ENCODE measurements at regions of chr22 and their contacts with region 1.

Region 1: GRCh38 chr22:45163451-45164269 is at the start of gene NUP50:
- DNase-seq: peak; percentile 95 to 98 (median 97)
- H3K4me3 ChIP-seq: peak within 1 kb of the TSS; percentile 64 to 73
- H3K4me3 Mint-ChIP-seq: peak within 1 kb of the TSS; percentile 93 to 99 (median 97)
- H3K27ac ChIP-seq: peak within 1 kb of the TSS; percentile 88
- H3K27ac Mint-ChIP-seq: peak within 1 kb of the TSS; percentile 92 to 98 (median 97)
- H3K4me1 ChIP-seq: peaks cover 68% of the 10 kb centered on the region
- H3K4me1 Mint-ChIP-seq: peaks cover 42 to 74% (median 50%) of the 10 kb centered on the region in 4 donors
- H3K27me3 ChIP-seq: no peaks in the 10 kb centered on the region
- H3K27me3 Mint-ChIP-seq: no peaks in the 10 kb centered on the region
- total RNA-seq, gene NUP50: 142 to 158 TPM

Region 2: DNA sequence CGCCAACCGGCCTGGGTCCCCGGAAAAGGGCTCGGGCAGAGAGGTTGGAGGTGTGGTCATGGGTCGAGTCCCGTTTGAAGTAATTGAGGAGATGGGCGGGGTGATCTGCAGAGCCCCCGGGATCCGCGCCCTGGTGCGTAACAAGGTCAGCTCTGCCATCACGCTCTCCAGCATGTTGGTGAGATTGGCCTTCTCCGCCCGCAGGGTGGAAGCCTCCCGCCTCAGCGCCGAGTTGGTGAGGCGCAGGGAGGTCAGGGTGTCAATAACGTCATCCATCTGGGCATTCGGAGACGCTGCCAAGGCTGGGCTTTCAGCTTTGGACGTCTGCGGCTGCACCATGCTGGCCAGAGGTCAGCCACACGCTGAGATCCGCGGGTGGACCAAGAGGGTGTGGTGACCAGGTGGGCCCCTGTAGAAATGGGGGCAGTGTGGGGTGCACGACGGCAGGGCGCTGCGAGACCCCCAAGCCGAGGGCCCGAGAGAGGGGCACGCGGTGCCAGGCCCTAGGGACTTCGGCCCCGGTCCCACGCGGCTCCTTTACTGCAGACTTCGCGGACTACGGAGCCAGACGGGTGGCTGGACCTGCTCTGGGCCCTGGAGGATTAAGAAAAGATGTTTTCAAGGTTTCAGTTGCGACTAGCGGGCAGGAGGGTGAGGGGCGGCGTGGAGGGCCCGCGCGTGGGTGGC is 666.3 kb before region 1 on chr22:
- CTCF ChIA-PET with region 1: no interaction called
- POLR2A ChIA-PET with region 1: no interaction called
- intact Hi-C with region 1: loop called (anchors 5 kb)
- DNase-seq: peak in 2 of 5 donors; percentile 9 to 46
- H3K4me3 ChIP-seq: peak overlapping the region in 1 of 2 donors; percentile 45
- H3K4me3 Mint-ChIP-seq: peak overlapping the region; percentile 52 to 84 (median 78)
- H3K27ac ChIP-seq: peak overlapping the region; percentile 73
- H3K27ac Mint-ChIP-seq: peak overlapping the region; percentile 82 to 91 (median 89)
- H3K4me1 ChIP-seq: peaks cover 56% of the 10 kb centered on the region
- H3K4me1 Mint-ChIP-seq: peaks cover 23 to 61% (median 42%) of the 10 kb centered on the region in 4 donors
- H3K27me3 ChIP-seq: no peaks in the 10 kb centered on the region
- H3K27me3 Mint-ChIP-seq: no peaks in the 10 kb centered on the region

Region 3: GRCh38 chr22:44567846-44568493 is 595.7 kb before region 1 on chr22:
- CTCF ChIA-PET with region 1: no interaction called
- POLR2A ChIA-PET with region 1: no interaction called
- intact Hi-C with region 1: no loop called
- DNase-seq: peak in 4 of 5 donors; percentile 30 to 39 (median 34)
- H3K4me3 ChIP-seq: no peak overlapping the region
- H3K4me3 Mint-ChIP-seq: no peak overlapping the region
- H3K27ac ChIP-seq: no peak overlapping the region
- H3K27ac Mint-ChIP-seq: no peak overlapping the region
- H3K4me1 ChIP-seq: no peaks in the 10 kb centered on the region
- H3K4me1 Mint-ChIP-seq: no peaks in the 10 kb centered on the region
- H3K27me3 ChIP-seq: no peaks in the 10 kb centered on the region
- H3K27me3 Mint-ChIP-seq: peaks cover 9 to 10% of the 10 kb centered on the region in 2 donors

Region 4: DNA sequence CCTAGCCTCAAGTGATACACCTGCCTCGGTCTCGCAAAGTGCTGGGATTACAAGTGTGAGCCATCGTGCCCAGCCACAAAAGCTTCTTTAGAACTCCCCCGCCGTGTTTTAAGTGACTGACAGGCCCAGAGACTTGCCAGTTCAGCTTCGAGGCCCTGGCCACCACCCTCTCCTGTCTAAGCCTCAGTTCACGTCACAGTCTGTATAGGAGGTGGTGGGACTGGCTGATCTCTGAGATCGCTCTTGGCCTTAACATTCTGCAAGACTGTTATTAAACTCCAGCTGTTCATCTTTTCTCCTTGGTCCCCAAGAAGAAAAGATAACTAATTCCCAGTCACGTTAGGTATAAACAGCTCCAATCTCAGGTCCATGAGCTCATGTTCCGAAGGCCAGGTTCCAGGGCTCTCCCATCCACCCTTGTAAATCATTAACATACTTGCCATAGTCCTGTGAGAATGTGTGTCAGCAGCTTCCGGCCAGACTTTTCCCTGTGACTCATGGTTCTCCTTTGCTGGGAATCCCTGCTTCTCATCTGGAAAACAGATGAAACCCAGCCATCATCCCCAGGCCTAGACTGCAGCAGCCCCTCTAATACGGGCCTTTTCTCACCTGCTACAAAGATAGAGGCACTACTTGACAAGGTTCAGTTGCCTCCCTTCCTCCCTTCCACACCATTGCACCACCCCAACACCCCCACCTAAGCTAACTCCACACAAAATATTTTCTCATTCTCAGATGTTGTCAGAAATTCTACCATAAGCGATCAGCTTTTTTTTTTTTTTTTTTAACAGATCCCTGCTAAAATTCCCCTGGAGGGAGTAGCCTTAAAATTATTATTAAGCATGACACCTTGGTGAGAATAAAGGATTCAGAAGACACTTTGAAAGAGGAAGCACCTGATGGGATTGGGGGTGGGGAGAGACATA is 82.7 kb after region 1 on chr22:
- CTCF ChIA-PET with region 1: no interaction called
- POLR2A ChIA-PET with region 1: interaction called, 5 read pairs
- intact Hi-C with region 1: loop called (anchors 5 kb)
- DNase-seq: no peak
- H3K4me3 ChIP-seq: no peak overlapping the region
- H3K4me3 Mint-ChIP-seq: peak overlapping the region in 2 of 8 donors; percentile 40 to 80
- H3K27ac ChIP-seq: no peak overlapping the region
- H3K27ac Mint-ChIP-seq: peak overlapping the region in 4 of 7 donors; percentile 70 to 91 (median 84)
- H3K4me1 ChIP-seq: peaks cover 9% of the 10 kb centered on the region
- H3K4me1 Mint-ChIP-seq: peaks cover 0 to 39% (median 14%) of the 10 kb centered on the region in 4 donors
- H3K27me3 ChIP-seq: no peaks in the 10 kb centered on the region
- H3K27me3 Mint-ChIP-seq: no peaks in the 10 kb centered on the region

Region 5: GRCh38 chr22:45318168-45318557 is 154.5 kb after region 1 on chr22:
- CTCF ChIA-PET with region 1: interaction called, 3 read pairs
- POLR2A ChIA-PET with region 1: no interaction called
- intact Hi-C with region 1: loop called (anchors 5 kb)
- DNase-seq: peak; percentile 93 to 97 (median 96)
- H3K4me3 ChIP-seq: peak overlapping the region in 1 of 2 donors; percentile 49
- H3K4me3 Mint-ChIP-seq: peak overlapping the region; percentile 81 to 89 (median 83)
- H3K27ac ChIP-seq: peak overlapping the region; percentile 94
- H3K27ac Mint-ChIP-seq: peak overlapping the region; percentile 96 to 100 (median 99)
- H3K4me1 ChIP-seq: peaks cover 75% of the 10 kb centered on the region
- H3K4me1 Mint-ChIP-seq: peaks cover 36 to 92% (median 73%) of the 10 kb centered on the region in 4 donors
- H3K27me3 ChIP-seq: no peaks in the 10 kb centered on the region
- H3K27me3 Mint-ChIP-seq: no peaks in the 10 kb centered on the region

Region 6: DNA sequence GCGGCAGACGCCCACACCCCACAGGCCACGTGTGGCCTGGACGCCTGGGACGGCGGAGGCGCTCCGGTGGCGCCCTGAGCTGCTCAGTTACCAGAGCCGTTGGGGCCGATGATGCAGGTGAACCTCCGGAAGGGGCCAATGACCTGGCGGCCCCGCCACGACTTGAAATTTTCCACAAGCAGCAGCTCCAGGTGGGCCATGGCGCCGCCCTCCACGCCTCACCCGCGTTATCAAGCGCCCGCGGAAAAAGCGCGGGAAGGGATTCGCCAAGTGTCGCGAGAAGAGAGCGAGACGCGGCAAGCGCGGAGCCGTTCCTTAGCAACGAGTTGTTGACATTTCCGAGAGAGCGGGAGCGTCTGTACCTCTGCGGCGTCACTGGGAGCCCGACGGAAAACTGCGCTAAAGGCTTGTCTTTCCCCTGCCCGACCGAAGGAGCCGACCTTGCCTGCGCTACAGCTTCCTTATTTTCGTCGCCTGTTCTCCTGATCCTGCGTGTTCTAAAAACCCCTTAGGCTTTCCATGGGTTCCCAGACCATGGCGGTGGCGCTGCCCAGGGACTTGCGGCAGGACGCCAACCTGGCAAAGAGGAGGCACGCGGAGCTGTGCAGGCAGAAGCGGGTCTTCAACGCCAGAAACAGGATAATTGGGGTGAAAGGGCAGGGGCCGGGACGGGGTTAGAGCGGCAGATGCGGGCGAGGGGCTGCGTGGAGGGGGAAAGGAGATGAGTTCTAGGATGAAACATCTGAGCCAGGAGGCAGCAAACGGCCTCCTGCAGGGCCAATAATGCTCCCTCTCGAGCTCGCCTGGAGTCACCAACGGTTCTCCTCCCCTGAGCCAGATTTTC is 249.9 kb after region 1 on chr22 and contains the starts of genes RIBC2 and SMC1B:
- CTCF ChIA-PET with region 1: no interaction called
- POLR2A ChIA-PET with region 1: interaction called, 3 read pairs
- intact Hi-C with region 1: loop called (anchors 10 kb)
- DNase-seq: peak; percentile 71 to 89 (median 86)
- H3K4me3 ChIP-seq: peak within 1 kb of the TSS in 1 of 2 donors; percentile 68
- H3K4me3 Mint-ChIP-seq: peak within 1 kb of the TSS; percentile 59 to 88 (median 82)
- H3K27ac ChIP-seq: peak within 1 kb of the TSS; percentile 35
- H3K27ac Mint-ChIP-seq: peak within 1 kb of the TSS; percentile 68 to 94 (median 87)
- H3K4me1 ChIP-seq: peaks cover 14% of the 10 kb centered on the region
- H3K4me1 Mint-ChIP-seq: peaks cover 4 to 7% (median 6%) of the 10 kb centered on the region in 4 donors
- H3K27me3 ChIP-seq: no peaks in the 10 kb centered on the region
- H3K27me3 Mint-ChIP-seq: no peaks in the 10 kb centered on the region
- total RNA-seq, gene RIBC2: not detected
- total RNA-seq, gene SMC1B: 0.08 TPM in 1 of 2 experiments, not detected in the other

Measured in CD4-positive, alpha-beta memory T cell (primary cell).